Psoas muscle (tissue), 8 donors: ENCODE measurements at regions of chr6 and their contacts with region 1.

Region 1: GRCh38 chr6:108581237-108581931 is 20.7 kb downstream of the FOXO3 start:
- DNase-seq: peak; percentile 76 to 82
- ATAC-seq: peak; percentile 40 to 94 (median 86)
- H3K4me3 ChIP-seq: peak overlapping the region; percentile 2
- H3K27ac ChIP-seq: peak overlapping the region; percentile 66
- H3K4me1 ChIP-seq: peaks cover 96% of the 10 kb centered on the region
- H3K27me3 ChIP-seq: no peaks in the 10 kb centered on the region
- CTCF ChIP-seq: no peak

Region 2: DNA sequence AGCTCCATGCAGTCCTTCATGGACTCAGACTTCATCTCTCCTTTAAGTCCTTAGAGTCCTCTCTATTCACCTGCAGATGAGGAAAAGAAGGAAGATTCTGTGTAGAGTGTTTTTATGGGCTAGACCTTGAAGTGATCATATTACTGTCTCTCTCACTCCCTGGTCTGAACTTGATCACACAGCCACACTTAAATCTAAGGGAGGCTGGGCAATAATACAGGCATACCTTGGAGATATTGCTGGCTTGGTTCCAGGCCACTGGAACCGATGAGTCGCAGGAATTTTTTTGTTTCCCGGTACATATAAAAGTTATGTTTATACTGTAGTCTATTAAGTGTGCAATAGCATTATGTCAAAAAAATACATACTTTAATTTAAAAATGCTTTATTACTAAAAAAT is 79.8 kb before region 1 on chr6:
- intact Hi-C with region 1: no loop called
- DNase-seq: no peak
- ATAC-seq: no peak
- H3K4me3 ChIP-seq: no peak overlapping the region
- H3K27ac ChIP-seq: no peak overlapping the region
- H3K4me1 ChIP-seq: no peaks in the 10 kb centered on the region
- H3K27me3 ChIP-seq: no peaks in the 10 kb centered on the region
- CTCF ChIP-seq: no peak

Region 3: DNA sequence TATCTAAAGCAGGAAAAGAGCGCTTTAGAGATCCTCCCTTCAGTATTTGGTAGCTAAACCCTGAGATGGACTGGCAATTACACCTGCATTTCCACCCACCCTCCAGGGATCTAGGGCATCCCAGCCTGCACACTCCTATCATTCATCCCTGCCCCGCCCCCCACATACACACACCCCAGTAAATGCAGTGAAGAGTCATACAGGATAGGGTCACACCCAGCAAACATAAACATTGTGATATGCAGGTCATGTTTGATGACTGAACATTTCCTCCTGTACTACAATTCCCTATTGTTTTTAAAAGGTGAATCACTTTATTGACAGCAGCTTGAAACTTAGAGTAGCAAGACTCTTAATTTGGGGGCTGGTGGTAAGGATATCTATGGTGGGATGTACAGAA is 92.2 kb after region 1 on chr6:
- intact Hi-C with region 1: loop called in 1 of 2 experiments (anchors 5 kb)
- DNase-seq: no peak
- ATAC-seq: no peak
- H3K4me3 ChIP-seq: no peak overlapping the region
- H3K27ac ChIP-seq: peak overlapping the region; percentile 63
- H3K4me1 ChIP-seq: peaks cover 93% of the 10 kb centered on the region
- H3K27me3 ChIP-seq: no peaks in the 10 kb centered on the region
- CTCF ChIP-seq: no peak